Dendritic cell treated with granulocyte-macrophage colony-stimulating factor and Interleukin-4, amounts not matched to agents 40 ng/mL and 50 ng/mL, for 4 days (primary cell): ENCODE measurements at regions of chr20 and their contacts with region 1.

Region 1: DNA sequence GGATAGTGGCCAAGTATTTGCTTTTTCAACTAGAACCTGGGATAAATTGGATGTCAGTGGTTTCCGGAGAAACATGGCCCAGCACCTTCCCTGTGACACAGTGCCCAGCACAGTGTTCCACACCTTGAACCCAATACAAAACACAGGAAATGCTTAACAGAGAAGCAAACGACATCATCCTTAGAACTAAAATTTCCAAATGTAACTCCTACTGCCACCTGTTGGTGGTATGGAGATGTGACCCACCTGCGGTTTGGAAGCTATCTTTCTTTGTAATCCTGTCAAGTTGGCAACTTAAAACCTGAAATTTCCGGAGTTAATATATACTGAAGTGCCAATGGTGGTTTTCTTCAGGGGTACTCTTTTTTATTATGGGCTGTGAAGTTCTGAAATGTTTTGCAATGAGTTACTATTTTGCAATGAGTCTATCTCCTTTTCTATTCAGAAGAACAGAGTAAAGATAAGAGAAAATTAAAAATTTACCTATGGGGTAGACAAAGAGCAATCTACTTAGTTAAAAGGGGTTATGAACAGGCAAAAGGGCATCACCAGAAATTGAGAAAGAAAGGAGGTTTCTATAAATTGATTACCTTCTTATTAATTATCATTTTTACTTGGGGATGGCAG is 658.8 kb downstream of the PTPRT start:
- H3K4me3 Mint-ChIP-seq: no peak overlapping the region
- H3K27ac Mint-ChIP-seq: peak overlapping the region; percentile 74
- H3K4me1 Mint-ChIP-seq: peaks cover 27% of the 10 kb centered on the region
- H3K27me3 Mint-ChIP-seq: peaks cover 18% of the 10 kb centered on the region

Region 2: DNA sequence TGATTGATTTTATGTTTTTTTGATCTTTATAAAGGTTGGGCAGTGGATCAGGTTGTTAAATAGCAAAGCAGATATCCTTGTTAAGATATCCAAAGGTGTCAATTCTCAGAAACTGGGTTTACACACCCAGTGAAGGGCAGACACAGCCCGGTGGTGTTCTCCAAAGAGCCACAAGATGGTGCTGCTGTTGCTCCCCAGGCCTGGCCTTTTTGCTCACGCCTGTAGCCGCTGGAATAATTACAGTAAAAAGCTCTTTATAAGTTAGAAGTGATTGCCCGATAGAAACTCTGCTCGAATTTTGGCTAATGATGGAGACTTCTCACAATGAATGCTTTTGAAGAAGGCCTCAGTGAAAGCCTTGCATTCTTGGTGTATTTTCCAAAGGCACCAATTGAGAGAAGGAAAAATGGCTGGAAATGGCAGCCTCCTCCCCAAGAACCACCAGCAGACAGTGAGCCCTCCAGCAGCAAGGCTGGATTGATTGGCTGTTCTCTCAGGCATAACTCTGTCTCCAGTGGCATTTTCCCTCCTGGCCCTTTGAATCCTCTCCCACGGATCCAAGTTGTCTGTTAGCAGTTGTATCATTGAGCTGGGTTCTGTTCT is 792.2 kb before region 1 on chr20:
- intact Hi-C with region 1: loop called (anchors 10 kb)
- H3K4me3 Mint-ChIP-seq: no peak overlapping the region
- H3K27ac Mint-ChIP-seq: no peak overlapping the region
- H3K4me1 Mint-ChIP-seq: no peaks in the 10 kb centered on the region
- H3K27me3 Mint-ChIP-seq: no peaks in the 10 kb centered on the region

Region 3: GRCh38 chr20:42191143-42191917 is 339.6 kb before region 1 on chr20:
- intact Hi-C with region 1: loop called (anchors 10 kb)
- H3K4me3 Mint-ChIP-seq: no peak overlapping the region
- H3K27ac Mint-ChIP-seq: no peak overlapping the region
- H3K4me1 Mint-ChIP-seq: no peaks in the 10 kb centered on the region
- H3K27me3 Mint-ChIP-seq: no peaks in the 10 kb centered on the region

Region 4: DNA sequence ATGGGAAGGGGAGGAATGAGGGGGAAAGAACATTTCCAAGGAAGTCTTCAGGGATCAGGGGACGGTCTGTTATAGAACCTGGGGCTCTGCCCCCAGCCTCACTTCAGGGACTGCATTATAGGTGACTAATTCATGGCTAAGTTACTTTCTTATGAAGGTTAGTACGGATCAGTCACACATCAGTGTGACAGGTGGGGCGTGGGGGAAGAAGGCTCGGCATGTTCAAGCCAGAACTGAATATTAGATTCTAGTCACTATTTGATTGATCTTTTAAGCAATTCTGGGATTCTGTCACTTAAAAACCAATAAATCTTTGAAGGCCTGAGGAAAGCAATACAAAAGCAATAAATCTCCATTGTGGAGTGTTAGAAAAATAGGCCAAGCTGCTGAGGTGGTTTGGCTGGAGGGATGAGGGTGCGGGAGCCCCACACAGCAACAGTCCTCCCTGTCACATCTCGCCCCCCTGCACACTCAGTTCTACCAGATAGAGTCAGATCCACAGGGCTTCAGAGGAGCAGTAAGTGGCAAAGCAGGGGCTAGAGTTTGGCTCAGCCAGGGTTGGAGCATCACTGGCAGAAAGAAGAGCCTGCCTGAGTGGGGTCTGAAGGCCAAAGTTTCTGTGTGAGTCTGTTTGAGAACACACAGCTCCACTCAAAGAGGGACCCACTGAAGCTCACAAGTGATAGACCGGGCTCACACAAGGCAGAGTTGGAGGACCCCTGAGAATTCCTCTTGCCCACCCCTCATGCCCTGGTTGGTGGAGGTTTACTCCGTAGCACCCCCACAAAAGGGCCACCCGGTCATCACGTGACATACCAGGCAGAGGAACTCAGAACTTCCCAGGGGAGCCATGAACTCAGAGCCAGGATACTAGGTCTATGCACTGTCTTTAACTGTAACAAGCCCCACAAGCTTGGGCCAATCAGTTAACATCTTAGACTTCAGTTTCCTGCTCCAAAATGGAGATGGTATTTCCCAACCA is 184.5 kb before region 1 on chr20:
- intact Hi-C with region 1: no loop called
- H3K4me3 Mint-ChIP-seq: no peak overlapping the region
- H3K27ac Mint-ChIP-seq: no peak overlapping the region
- H3K4me1 Mint-ChIP-seq: no peaks in the 10 kb centered on the region
- H3K27me3 Mint-ChIP-seq: peaks cover 3% of the 10 kb centered on the region

Region 5: DNA sequence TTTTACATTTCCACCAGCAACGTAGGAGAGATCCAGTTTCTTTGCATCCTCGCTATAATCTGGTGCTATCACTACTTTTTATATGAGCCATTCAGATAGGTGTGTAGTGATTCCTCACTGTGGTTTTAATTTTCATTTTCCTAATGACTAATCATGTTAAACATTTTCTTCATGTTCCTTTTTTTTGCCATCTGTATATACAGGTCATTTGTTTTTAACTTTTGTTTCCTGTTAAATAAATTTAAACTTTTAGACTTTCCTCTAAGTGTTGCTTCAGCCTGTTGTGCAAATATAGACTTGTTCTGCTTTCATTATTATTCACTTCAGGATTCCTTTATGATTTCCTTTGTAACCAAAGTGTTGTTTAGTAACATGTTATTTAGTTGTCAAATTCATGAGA is 38.6 kb before region 1 on chr20:
- intact Hi-C with region 1: loop called (anchors 5 kb)
- H3K4me3 Mint-ChIP-seq: no peak overlapping the region
- H3K27ac Mint-ChIP-seq: peak overlapping the region; percentile 53
- H3K4me1 Mint-ChIP-seq: peaks cover 58% of the 10 kb centered on the region
- H3K27me3 Mint-ChIP-seq: peaks cover 3% of the 10 kb centered on the region